ENCODE measurements at regions of chr13 and their contacts with region 1.

Region 1: DNA sequence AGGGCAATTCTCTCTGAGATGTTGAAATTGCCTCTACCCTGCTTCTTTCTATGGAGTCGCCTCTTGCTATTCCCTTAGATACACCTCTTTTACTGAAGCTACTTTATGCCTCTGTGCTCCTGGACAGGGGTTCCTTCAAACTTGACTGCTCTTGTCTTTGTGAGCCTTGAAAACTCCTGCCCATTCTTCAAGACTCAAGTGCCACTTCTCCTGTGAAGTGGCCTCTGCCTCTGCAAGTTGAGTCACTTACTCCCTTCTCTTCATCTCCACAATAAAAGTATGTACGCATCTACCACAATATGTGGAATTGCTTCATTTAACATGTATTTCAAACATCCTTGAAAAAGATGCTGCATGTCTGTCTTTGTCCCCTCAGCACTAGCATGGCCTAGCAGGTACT is 66.0 kb upstream of the TPP2 start:
- DNase-seq: no peak
- H3K4me3 ChIP-seq: no peak overlapping the region
- H3K27ac ChIP-seq: no peak overlapping the region
- H3K4me1 ChIP-seq: no peaks in the 10 kb centered on the region
- H3K27me3 ChIP-seq: no peaks in the 10 kb centered on the region
- CTCF ChIP-seq: no peak
- POLR2A ChIP-seq: no peak

Region 2: DNA sequence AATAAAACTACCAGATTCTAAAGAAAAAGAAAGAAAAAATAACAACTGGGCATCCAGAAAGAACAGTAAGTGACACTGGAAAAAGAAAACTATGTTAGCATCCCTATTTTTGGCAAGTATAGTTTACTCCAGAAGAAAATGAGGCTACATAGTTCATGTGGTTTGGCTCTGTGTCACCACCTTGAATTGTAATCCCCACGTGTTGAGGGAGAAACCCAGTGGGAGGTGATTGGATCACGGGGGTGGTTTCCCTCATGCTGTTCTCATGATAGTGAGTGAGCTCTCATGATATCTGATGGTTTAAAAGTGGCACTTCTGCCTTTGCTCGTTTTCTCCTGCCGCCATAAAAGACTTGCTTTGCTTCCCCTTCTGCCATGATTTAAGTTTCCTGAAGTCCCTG is 1001.3 kb before region 1 on chr13:
- intact Hi-C with region 1: no loop called
- DNase-seq: no peak
- H3K4me3 ChIP-seq: no peak overlapping the region
- H3K27ac ChIP-seq: no peak overlapping the region
- H3K4me1 ChIP-seq: no peaks in the 10 kb centered on the region
- H3K27me3 ChIP-seq: no peaks in the 10 kb centered on the region
- CTCF ChIP-seq: no peak
- POLR2A ChIP-seq: no peak

Region 3: DNA sequence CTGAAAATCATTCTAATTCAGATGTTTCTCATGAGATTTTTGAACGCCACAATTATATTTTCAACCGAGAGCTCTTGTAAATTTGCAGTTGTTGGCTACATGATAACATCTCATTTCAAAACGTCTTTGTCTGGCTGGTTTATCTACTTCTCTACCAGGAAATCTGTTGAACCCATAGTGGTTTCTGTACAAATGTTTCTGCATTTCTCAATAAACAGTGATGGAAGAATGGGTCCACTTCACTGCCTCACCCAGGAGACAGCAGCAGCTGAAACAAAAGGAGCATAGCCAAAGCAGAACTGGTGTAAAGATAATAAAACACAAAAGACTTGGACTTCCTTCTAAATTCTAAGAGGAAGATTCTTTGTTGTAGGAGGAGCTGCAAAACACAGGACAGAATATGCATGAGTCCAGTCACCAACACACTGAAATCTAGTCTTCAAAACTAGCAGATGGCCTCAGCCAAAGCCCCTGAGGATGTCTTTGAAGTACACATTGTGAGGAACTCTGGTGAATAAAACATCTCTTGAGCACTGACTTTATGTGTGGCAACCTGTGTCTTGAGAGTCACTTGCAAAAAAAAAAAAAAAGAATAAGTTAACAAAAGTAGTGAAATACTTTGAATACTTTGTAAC is 60.4 kb before region 1 on chr13:
- intact Hi-C with region 1: no loop called
- DNase-seq: no peak
- H3K4me3 ChIP-seq: no peak overlapping the region
- H3K27ac ChIP-seq: no peak overlapping the region
- H3K4me1 ChIP-seq: no peaks in the 10 kb centered on the region
- H3K27me3 ChIP-seq: no peaks in the 10 kb centered on the region
- CTCF ChIP-seq: no peak
- POLR2A ChIP-seq: no peak

Region 4: DNA sequence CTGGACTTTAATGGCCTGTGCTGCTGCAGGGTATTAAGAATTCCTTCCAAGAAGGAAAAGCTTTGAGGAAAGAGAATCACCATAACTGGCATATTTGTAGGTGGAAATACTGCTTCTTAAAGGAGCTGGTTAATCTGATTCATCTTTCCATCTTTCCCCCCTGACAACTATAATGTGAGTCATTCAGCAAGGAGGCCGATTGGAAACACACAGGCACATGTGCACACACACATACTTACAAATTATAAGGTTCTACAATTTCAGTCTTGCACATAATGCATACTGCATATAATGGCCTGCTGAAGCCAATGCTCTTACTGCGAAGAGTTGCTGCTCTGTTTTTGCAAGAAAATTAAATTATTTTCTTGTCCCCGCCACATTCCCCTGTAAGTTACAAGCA is 12.8 kb before region 1 on chr13:
- intact Hi-C with region 1: loop called in 1 of 2 experiments (anchors 2 kb)
- DNase-seq: no peak
- H3K4me3 ChIP-seq: no peak overlapping the region
- H3K27ac ChIP-seq: no peak overlapping the region
- H3K4me1 ChIP-seq: no peaks in the 10 kb centered on the region
- H3K27me3 ChIP-seq: no peaks in the 10 kb centered on the region
- CTCF ChIP-seq: no peak
- POLR2A ChIP-seq: no peak